Psoas muscle (tissue), 8 donors: ENCODE measurements at regions of chr9 and their contacts with region 1.

Region 1: DNA sequence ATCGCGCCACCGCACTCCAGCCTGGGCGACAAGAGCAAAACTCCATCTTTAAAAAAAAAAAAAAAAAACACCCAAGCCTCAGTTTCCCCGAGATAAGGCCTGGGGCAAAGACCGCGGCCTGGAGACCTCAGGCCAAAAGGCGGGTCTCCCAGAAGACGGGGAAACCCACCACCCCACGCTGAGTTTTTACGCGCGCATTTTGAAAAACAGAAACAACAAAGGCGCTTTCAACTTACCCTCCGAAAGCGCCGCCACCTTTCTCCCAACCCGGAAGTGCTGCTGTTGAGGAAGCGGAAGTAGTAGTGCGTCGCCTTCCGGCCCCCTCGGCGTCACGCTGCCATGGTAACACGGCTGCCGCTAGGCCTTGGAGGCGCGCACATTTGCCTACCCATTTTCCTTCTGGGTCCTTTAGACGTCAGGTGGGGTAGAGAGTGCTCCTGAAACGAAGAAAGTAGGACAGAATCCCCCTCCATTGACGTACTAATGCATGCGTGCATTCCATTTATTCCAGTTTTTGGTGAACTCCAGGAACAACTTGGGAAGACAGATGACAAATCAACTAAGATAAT is at the start of gene TTF1:
- DNase-seq: peak; percentile 91 to 95
- ATAC-seq: peak; percentile 95 to 99 (median 98)
- H3K4me3 ChIP-seq: peak within 1 kb of the TSS; percentile 96
- H3K27ac ChIP-seq: no peak within 1 kb of the TSS
- H3K4me1 ChIP-seq: peaks cover 17% of the 10 kb centered on the region
- H3K27me3 ChIP-seq: peaks cover 0 to 27% (median 5%) of the 10 kb centered on the region in 3 donors
- CTCF ChIP-seq: no peak
- total RNA-seq, gene TTF1: 11.1 to 15.3 (median 12.0) TPM

Region 2: GRCh38 chr9:132354637-132355355 is 51.8 kb before region 1 on chr9 and contains the start of gene SETX:
- intact Hi-C with region 1: loop called in 1 of 2 experiments (anchors 5 kb)
- DNase-seq: peak; percentile 99
- ATAC-seq: peak; percentile 96 to 99 (median 98)
- H3K4me3 ChIP-seq: peak within 1 kb of the TSS; percentile 98
- H3K27ac ChIP-seq: peak within 1 kb of the TSS; percentile 99
- H3K4me1 ChIP-seq: peaks cover 29% of the 10 kb centered on the region
- H3K27me3 ChIP-seq: no peaks in the 10 kb centered on the region
- CTCF ChIP-seq: no peak
- total RNA-seq, gene SETX: 20.6 to 26.8 (median 22.7) TPM

Region 3: GRCh38 chr9:132372177-132373095 is 34.2 kb before region 1 on chr9:
- intact Hi-C with region 1: no loop called
- DNase-seq: peak; percentile 21 to 61
- ATAC-seq: peak; percentile 32 to 75 (median 72)
- H3K4me3 ChIP-seq: no peak overlapping the region
- H3K27ac ChIP-seq: peak overlapping the region; percentile 55
- H3K4me1 ChIP-seq: no peaks in the 10 kb centered on the region
- H3K27me3 ChIP-seq: no peaks in the 10 kb centered on the region
- CTCF ChIP-seq: no peak

Region 4: DNA sequence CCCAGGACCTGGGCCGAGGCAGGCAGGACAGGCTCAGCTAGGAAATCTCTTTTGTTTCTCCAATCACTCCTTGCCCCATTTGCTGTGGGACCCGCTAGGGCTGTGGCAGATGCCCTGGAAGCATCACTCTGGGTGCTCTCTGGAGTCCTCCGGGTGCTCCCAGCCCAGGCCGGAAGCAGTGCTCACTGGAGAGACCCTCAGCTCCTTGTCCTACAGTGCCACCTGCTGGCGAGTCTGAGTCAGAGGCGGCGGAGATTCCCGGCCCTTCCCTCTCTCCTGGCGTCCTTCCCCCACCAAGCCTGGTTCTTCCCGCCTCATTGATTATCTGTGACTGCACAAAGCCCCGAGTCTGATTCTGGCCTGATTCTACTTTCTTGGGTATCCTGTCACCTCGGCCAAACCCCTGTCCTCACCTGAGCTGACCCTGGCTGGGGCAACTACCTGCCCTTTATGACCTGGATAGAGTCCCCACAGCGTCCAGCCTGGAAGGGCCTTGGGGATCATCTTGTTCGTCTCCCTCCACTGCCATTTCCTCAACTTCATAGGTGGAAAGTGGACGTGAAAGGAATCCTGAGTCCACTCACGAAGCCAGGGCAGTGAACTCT is 168.5 kb after region 1 on chr9:
- intact Hi-C with region 1: loop called (anchors 5 to 10 kb)
- DNase-seq: peak; percentile 53 to 80
- ATAC-seq: peak; percentile 71 to 84 (median 80)
- H3K4me3 ChIP-seq: no peak overlapping the region
- H3K27ac ChIP-seq: no peak overlapping the region
- H3K4me1 ChIP-seq: peaks cover 4% of the 10 kb centered on the region
- H3K27me3 ChIP-seq: peaks cover 0 to 81% (median 16%) of the 10 kb centered on the region in 3 donors
- CTCF ChIP-seq: peak; percentile 66

Region 5: DNA sequence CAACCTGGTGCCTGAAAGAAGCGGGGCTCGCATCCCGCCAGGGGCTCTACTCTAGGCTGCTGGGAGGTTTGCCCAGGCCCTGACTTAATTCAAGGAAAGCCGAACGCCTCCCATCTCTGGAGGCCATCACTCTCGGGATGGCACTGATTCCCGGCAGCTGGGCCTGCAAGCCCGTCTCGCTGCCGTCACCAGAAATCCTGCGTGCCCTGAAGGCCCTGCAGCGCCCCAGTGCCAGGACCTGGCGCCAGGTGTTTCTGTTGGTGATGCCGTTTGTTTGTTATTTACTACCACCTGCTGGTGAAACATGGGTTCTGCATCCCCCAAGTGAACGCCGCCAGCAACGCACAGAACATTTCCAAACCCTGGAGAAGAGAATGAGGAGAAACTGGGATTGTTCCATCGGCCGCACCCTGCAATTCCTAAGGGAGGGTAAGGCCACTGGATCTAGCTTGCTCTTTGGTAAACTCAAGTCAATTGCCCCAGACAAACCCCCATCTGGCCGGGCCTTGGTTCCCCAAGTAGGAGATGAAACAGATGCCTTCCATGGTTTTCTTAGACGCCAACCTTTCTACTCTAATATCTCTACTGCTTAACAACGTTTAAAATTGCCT is 393.5 kb after region 1 on chr9:
- intact Hi-C with region 1: loop called (anchors 2 to 5 kb)
- DNase-seq: peak; percentile 51 to 83
- ATAC-seq: peak; percentile 68 to 89 (median 83)
- H3K4me3 ChIP-seq: no peak overlapping the region
- H3K27ac ChIP-seq: no peak overlapping the region
- H3K4me1 ChIP-seq: no peaks in the 10 kb centered on the region
- H3K27me3 ChIP-seq: peaks cover 0 to 37% (median 6%) of the 10 kb centered on the region in 3 donors
- CTCF ChIP-seq: peak; percentile 89